ENCODE measurements at regions of chr9 and their contacts with region 1.

Region 1: DNA sequence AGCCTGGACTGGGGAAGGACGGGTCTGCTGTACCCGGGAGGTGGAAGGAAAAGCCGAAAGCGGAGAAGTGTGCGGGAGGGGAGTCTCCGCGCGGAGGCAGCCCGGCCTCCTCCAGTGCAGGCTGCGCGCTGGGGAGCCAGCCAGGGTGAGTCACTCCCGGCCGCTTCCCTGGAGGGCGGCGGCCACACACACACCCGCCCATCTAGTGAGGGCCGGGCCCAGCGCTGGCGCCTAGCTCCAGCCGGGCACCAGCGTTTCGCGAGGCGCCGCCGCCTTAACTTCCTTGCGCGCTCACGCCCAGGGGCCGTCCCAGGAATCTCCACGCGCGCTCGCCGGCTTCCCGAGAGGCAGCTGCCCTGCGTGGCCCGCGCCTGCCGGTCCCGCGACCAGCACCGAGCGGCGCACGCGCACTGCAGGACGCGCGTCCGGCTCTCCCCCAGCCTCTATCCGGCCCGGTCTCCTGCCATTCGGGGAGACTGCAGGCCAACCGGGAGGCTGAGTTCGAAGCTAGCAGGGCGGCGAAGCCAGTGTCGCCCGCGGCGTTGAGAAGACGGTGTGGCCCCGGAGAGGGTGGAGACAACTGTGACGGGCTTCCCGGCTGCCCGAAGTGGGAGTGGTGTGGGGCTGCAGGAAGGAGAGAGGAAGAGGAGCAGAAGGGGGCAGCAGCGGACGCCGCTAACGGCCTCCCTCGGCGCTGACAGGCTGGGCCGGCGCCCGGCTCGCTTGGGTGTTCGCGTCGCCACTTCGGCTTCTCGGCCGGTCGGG is at the start of gene JAK2:
- DNase-seq: peak; percentile 62 to 85 (median 72)
- ATAC-seq: peak; percentile 87
- H3K4me3 ChIP-seq: peak within 1 kb of the TSS; percentile 52
- H3K4me3 Mint-ChIP-seq: peak within 1 kb of the TSS; percentile 83 to 98 (median 94)
- H3K27ac ChIP-seq: peak within 1 kb of the TSS; percentile 78
- H3K27ac Mint-ChIP-seq: peak within 1 kb of the TSS; percentile 80 to 94 (median 90)
- H3K4me1 ChIP-seq: peaks cover 20 to 32% of the 10 kb centered on the region in 2 donors
- H3K4me1 Mint-ChIP-seq: peaks cover 20 to 41% (median 26%) of the 10 kb centered on the region in 7 donors
- H3K27me3 ChIP-seq: no peaks in the 10 kb centered on the region
- H3K27me3 Mint-ChIP-seq: no peaks in the 10 kb centered on the region
- total RNA-seq, gene JAK2: 11.7 to 76.0 (median 17.5) TPM

Region 2: GRCh38 chr9:4297151-4297785 is 687.5 kb before region 1 on chr9:
- CTCF ChIA-PET with region 1: no interaction called
- POLR2A ChIA-PET with region 1: no interaction called
- intact Hi-C with region 1: loop called in 1 of 2 experiments (anchors 2 kb)
- DNase-seq: peak; percentile 12 to 47 (median 29)
- ATAC-seq: peak; percentile 55
- H3K4me3 ChIP-seq: peak overlapping the region; percentile 74
- H3K4me3 Mint-ChIP-seq: peak overlapping the region; percentile 93 to 98 (median 96)
- H3K27ac ChIP-seq: peak overlapping the region; percentile 68
- H3K27ac Mint-ChIP-seq: peak overlapping the region; percentile 80 to 97 (median 88)
- H3K4me1 ChIP-seq: peaks cover 0 to 4% of the 10 kb centered on the region in 2 donors
- H3K4me1 Mint-ChIP-seq: peaks cover 15 to 34% (median 21%) of the 10 kb centered on the region in 7 donors
- H3K27me3 ChIP-seq: no peaks in the 10 kb centered on the region
- H3K27me3 Mint-ChIP-seq: peaks cover 0 to 67% (median 28%) of the 10 kb centered on the region in 5 donors

Region 3: GRCh38 chr9:4662108-4662988 is 322.5 kb before region 1 on chr9 and contains the start of gene PLPP6:
- CTCF ChIA-PET with region 1: no interaction called
- POLR2A ChIA-PET with region 1: no interaction called
- intact Hi-C with region 1: loop called in 1 of 2 experiments (anchors 1 kb)
- DNase-seq: peak; percentile 55 to 81 (median 76)
- ATAC-seq: peak; percentile 86
- H3K4me3 ChIP-seq: peak within 1 kb of the TSS; percentile 63
- H3K4me3 Mint-ChIP-seq: peak within 1 kb of the TSS; percentile 89 to 98 (median 96)
- H3K27ac ChIP-seq: peak within 1 kb of the TSS; percentile 78
- H3K27ac Mint-ChIP-seq: peak within 1 kb of the TSS; percentile 85 to 98 (median 95)
- H3K4me1 ChIP-seq: peaks cover 21 to 50% of the 10 kb centered on the region in 2 donors
- H3K4me1 Mint-ChIP-seq: peaks cover 41 to 80% (median 64%) of the 10 kb centered on the region in 7 donors
- H3K27me3 ChIP-seq: no peaks in the 10 kb centered on the region
- H3K27me3 Mint-ChIP-seq: peaks cover 0 to 12% (median 0%) of the 10 kb centered on the region in 5 donors
- total RNA-seq, gene PLPP6: 7.4 to 24.1 (median 10.2) TPM

Region 4: GRCh38 chr9:4792572-4793458 is 192.0 kb before region 1 on chr9 and contains the start of gene RCL1:
- CTCF ChIA-PET with region 1: interaction called, 3 read pairs
- POLR2A ChIA-PET with region 1: interaction called, 13 read pairs
- intact Hi-C with region 1: loop called (anchors 1 kb)
- DNase-seq: peak; percentile 93 to 98 (median 97)
- ATAC-seq: peak; percentile 96
- H3K4me3 ChIP-seq: peak within 1 kb of the TSS; percentile 99
- H3K4me3 Mint-ChIP-seq: peak within 1 kb of the TSS; percentile 83 to 97 (median 94)
- H3K27ac ChIP-seq: peak within 1 kb of the TSS; percentile 80
- H3K27ac Mint-ChIP-seq: peak within 1 kb of the TSS; percentile 71 to 97 (median 94)
- H3K4me1 ChIP-seq: peaks cover 4 to 18% of the 10 kb centered on the region in 2 donors
- H3K4me1 Mint-ChIP-seq: peaks cover 21 to 56% (median 45%) of the 10 kb centered on the region in 7 donors
- H3K27me3 ChIP-seq: no peaks in the 10 kb centered on the region
- H3K27me3 Mint-ChIP-seq: peaks cover 0 to 11% (median 0%) of the 10 kb centered on the region in 5 donors
- total RNA-seq, gene RCL1: 21.5 to 39.4 (median 23.4) TPM

Region 5: GRCh38 chr9:4970970-4971641 is 13.7 kb before region 1 on chr9:
- CTCF ChIA-PET with region 1: interaction called, 3 read pairs
- POLR2A ChIA-PET with region 1: no interaction called
- intact Hi-C with region 1: loop called in 1 of 2 experiments (anchors 1 kb)
- DNase-seq: peak in 2 of 9 donors; percentile 11 to 58
- ATAC-seq: peak; percentile 75
- H3K4me3 ChIP-seq: no peak overlapping the region
- H3K4me3 Mint-ChIP-seq: no peak overlapping the region
- H3K27ac ChIP-seq: no peak overlapping the region
- H3K27ac Mint-ChIP-seq: no peak overlapping the region
- H3K4me1 ChIP-seq: peaks cover 0 to 11% of the 10 kb centered on the region in 2 donors
- H3K4me1 Mint-ChIP-seq: peaks cover 0 to 31% (median 0%) of the 10 kb centered on the region in 7 donors
- H3K27me3 ChIP-seq: no peaks in the 10 kb centered on the region
- H3K27me3 Mint-ChIP-seq: peaks cover 0 to under 1% (median 0%) of the 10 kb centered on the region in 5 donors

Region 6: DNA sequence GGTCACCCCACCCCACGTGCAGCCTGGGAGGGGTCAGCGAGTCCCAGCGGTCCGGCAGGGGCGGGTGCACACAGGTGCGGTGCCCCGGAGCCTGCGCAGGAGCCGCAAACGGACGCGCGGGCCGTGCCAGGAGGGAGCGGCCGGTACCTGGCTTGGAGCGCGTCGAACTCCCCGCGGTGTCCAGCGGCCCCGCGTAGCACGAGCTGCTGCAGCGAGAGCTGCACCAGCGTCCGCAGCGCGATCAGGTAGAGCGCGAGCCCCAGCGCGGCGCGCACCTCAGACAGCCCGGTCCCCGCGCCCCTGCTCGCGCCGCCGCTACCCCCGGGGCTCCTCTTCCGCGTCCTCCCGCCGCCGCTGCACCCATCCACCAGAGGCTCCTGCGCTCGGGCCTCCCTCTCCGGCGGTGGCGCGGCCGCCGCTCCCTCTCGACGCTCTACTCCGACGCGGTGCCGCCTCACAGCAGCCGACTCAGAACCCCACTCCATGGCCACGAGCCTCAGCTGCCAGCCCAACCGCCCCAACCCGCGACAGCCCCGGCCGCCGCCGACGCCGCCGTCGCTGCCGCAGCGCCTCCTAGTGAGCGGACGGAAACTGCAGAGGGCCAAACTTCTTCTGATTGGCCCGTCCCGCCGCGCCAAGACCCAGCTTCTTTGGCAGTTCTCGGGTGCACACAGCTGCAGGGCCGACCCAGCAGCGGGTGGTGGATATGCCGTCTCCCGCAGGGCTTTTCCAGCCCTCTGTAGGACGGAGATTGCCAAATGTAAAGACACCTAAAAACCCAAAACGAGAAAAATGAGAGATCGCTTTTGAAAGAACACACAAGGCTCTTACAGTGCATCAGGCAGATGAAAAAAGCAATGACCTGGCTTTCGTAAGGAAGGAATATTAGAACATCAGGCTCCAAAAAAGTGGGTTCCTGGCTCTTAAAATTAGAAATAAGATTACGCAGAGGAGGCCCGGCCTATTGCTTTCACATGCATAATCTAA is 848.0 kb after region 1 on chr9 and contains the start of gene ERMP1:
- CTCF ChIA-PET with region 1: no interaction called
- POLR2A ChIA-PET with region 1: no interaction called
- intact Hi-C with region 1: loop called in 1 of 2 experiments (anchors 10 kb)
- DNase-seq: peak; percentile 83 to 94 (median 91)
- ATAC-seq: peak; percentile 95
- H3K4me3 ChIP-seq: peak within 1 kb of the TSS; percentile 85
- H3K4me3 Mint-ChIP-seq: peak within 1 kb of the TSS; percentile 91 to 99 (median 95)
- H3K27ac ChIP-seq: peak within 1 kb of the TSS; percentile 60
- H3K27ac Mint-ChIP-seq: peak within 1 kb of the TSS; percentile 79 to 96 (median 89)
- H3K4me1 ChIP-seq: peaks cover 25 to 33% of the 10 kb centered on the region in 2 donors
- H3K4me1 Mint-ChIP-seq: peaks cover 28 to 71% (median 60%) of the 10 kb centered on the region in 7 donors
- H3K27me3 ChIP-seq: no peaks in the 10 kb centered on the region
- H3K27me3 Mint-ChIP-seq: no peaks in the 10 kb centered on the region
- total RNA-seq, gene ERMP1: 9.5 to 37.1 (median 20.0) TPM